Esophagus squamous epithelium (tissue), 5 donors: ENCODE measurements at regions of chr19 and their contacts with region 1.

Region 1: GRCh38 chr19:6862673-6863078 is 24.7 kb upstream of the ADGRE1 start:
- DNase-seq: peak; percentile 37
- H3K4me3 ChIP-seq: peak overlapping the region in 3 of 4 donors; percentile 31 to 55 (median 33)
- H3K27ac ChIP-seq: peak overlapping the region; percentile 21 to 78 (median 66)
- H3K4me1 ChIP-seq: peaks cover 0 to 21% (median 5%) of the 10 kb centered on the region in 3 donors
- H3K27me3 ChIP-seq: peaks cover 0 to 22% (median 0%) of the 10 kb centered on the region in 4 donors
- CTCF ChIP-seq: peak; percentile 85 to 96 (median 90)
- POLR2A ChIP-seq: no peak

Region 2: DNA sequence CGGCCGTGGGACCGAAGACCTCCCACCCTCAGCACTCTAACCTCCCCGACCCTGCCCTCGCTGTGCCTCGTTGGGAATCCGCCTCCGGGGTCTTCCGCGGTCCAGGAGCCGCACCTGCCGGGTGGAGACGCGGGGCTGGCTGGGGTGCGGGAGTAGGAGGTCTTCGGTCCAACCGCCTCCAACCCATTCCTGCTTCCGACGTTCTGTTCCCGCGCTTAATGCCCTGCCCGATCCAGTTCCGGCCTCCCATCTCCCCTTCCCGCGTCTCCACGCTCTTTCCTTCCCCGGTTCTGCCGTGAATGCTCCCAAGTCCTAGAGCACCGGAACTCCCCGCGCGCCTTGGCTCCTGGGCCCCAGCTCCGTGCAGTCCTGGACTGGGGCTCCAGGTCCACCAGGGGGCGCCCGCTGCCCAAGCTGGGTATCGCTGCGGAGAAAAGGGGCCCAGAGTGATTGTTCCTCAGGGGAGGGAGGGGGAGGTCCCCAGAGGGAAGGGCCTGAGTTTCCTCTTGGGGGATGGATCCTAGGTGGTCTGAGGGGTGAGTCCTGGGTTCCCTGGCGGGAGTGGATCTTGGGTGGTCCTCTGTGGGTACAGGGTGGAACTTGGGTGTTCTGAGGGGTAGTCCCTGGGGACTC is 345.9 kb before region 1 on chr19:
- intact Hi-C with region 1: loop called (anchors 5 kb)
- DNase-seq: no peak
- H3K4me3 ChIP-seq: peak overlapping the region; percentile 46 to 81 (median 74)
- H3K27ac ChIP-seq: peak overlapping the region; percentile 77 to 89 (median 88)
- H3K4me1 ChIP-seq: peaks cover 4 to 39% (median 22%) of the 10 kb centered on the region in 3 donors
- H3K27me3 ChIP-seq: peaks cover 0 to 3% (median 0%) of the 10 kb centered on the region in 4 donors
- CTCF ChIP-seq: peak; percentile 92 to 99 (median 97)
- POLR2A ChIP-seq: no peak

Region 3: DNA sequence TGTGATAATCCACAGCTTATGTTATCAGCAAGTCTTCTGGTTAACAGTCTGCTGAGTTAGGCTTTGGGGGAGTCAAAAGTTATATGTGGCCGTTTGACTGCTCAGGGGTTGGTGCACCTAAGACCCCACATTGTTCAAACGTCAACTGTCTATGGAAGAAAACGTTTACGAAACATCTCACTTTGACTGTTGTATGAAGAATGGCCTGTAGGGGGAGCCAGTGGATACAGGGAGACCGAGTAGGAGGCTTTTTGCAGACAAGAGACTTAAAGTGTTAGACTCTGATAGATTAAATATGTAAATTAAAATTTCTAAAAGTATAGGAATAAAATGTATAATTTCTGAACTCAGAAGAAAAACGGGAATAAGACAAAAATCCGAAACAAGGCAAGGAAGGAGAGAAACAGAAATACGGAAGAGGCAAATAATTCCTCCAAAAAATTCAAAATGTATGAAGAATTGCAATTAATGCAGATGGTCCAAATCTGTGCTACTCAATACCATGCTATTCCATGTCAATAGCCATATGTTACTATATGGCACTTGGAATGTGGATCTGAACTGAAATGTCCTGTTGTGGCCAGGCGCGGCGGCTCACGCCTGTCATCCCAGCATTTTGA is 230.6 kb before region 1 on chr19:
- intact Hi-C with region 1: loop called (anchors 5 kb)
- DNase-seq: peak; percentile 13
- H3K4me3 ChIP-seq: no peak overlapping the region
- H3K27ac ChIP-seq: no peak overlapping the region
- H3K4me1 ChIP-seq: no peaks in the 10 kb centered on the region
- H3K27me3 ChIP-seq: peaks cover 0 to 6% (median 0%) of the 10 kb centered on the region in 4 donors
- CTCF ChIP-seq: peak; percentile 55 to 87 (median 86)
- POLR2A ChIP-seq: no peak

Region 4: GRCh38 chr19:6753178-6754031 is 109.3 kb before region 1 on chr19:
- intact Hi-C with region 1: loop called (anchors 10 kb)
- DNase-seq: peak; percentile 41
- H3K4me3 ChIP-seq: peak overlapping the region; percentile 10 to 64 (median 38)
- H3K27ac ChIP-seq: peak overlapping the region; percentile 70 to 86 (median 81)
- H3K4me1 ChIP-seq: peaks cover 7 to 41% (median 11%) of the 10 kb centered on the region in 3 donors
- H3K27me3 ChIP-seq: no peaks in the 10 kb centered on the region
- CTCF ChIP-seq: peak; percentile 33 to 61 (median 46)
- POLR2A ChIP-seq: no peak